Activated CD4-positive, alpha-beta T cell treated with anti-CD3 and anti-CD28 coated beads for 36 hours (primary cell): ENCODE measurements at regions of chr2 and their contacts with region 1.

Region 1: GRCh38 chr2:145724311-145724898 is 1204.5 kb upstream of the ZEB2 start:
- DNase-seq: no peak
- ATAC-seq: no peak
- H3K4me3 Mint-ChIP-seq: no peak overlapping the region
- H3K27ac Mint-ChIP-seq: no peak overlapping the region
- H3K4me1 Mint-ChIP-seq: no peaks in the 10 kb centered on the region
- H3K27me3 Mint-ChIP-seq: no peaks in the 10 kb centered on the region

Region 2: GRCh38 chr2:145760781-145761649 is 36.6 kb after region 1 on chr2:
- CTCF ChIA-PET with region 1: no interaction called
- POLR2A ChIA-PET with region 1: interaction called, 10 read pairs
- intact Hi-C with region 1: no loop called
- DNase-seq: no peak
- ATAC-seq: no peak
- H3K4me3 Mint-ChIP-seq: no peak overlapping the region
- H3K27ac Mint-ChIP-seq: no peak overlapping the region
- H3K4me1 Mint-ChIP-seq: no peaks in the 10 kb centered on the region
- H3K27me3 Mint-ChIP-seq: no peaks in the 10 kb centered on the region

Region 3: DNA sequence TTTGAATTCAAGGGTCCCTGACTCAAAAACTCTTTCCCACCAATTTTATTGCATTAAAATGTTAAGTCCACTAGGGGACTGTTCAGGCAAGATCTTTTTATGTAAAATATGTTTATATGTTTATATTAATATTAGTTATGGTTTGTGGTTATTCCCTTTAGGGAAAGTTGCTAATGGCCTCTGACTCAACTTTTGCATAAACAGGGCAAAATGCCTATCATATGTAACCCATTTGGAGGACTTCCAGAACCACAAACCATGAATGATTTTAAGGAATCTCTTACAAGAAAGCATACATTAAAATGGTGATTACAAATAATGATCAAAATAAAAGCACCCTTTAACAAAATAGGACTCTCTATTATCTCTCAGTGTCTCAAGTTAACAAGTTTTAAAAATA is 280.1 kb after region 1 on chr2:
- CTCF ChIA-PET with region 1: no interaction called
- POLR2A ChIA-PET with region 1: no interaction called
- intact Hi-C with region 1: no loop called
- DNase-seq: no peak
- ATAC-seq: no peak
- H3K4me3 Mint-ChIP-seq: no peak overlapping the region
- H3K27ac Mint-ChIP-seq: no peak overlapping the region
- H3K4me1 Mint-ChIP-seq: no peaks in the 10 kb centered on the region
- H3K27me3 Mint-ChIP-seq: no peaks in the 10 kb centered on the region

Region 4: GRCh38 chr2:146094185-146094584 is 369.8 kb after region 1 on chr2:
- CTCF ChIA-PET with region 1: no interaction called
- POLR2A ChIA-PET with region 1: no interaction called
- intact Hi-C with region 1: no loop called
- DNase-seq: no peak
- ATAC-seq: no peak
- H3K4me3 Mint-ChIP-seq: no peak overlapping the region
- H3K27ac Mint-ChIP-seq: no peak overlapping the region
- H3K4me1 Mint-ChIP-seq: no peaks in the 10 kb centered on the region
- H3K27me3 Mint-ChIP-seq: no peaks in the 10 kb centered on the region